Ovary (tissue), 10 donors: ENCODE measurements at regions of chr18 and their contacts with region 1.

Region 1: GRCh38 chr18:2881088-2881839 is 34.5 kb downstream of the EMILIN2 start:
- DNase-seq: peak; percentile 85 to 91 (median 87)
- H3K4me3 ChIP-seq: no peak overlapping the region
- H3K27ac ChIP-seq: peak overlapping the region; percentile 51 to 86
- H3K4me1 ChIP-seq: peaks cover 14% of the 10 kb centered on the region
- H3K27me3 ChIP-seq: no peaks in the 10 kb centered on the region
- CTCF ChIP-seq: no peak
- EP300 ChIP-seq: no peak
- POLR2A ChIP-seq: no peak

Region 2: DNA sequence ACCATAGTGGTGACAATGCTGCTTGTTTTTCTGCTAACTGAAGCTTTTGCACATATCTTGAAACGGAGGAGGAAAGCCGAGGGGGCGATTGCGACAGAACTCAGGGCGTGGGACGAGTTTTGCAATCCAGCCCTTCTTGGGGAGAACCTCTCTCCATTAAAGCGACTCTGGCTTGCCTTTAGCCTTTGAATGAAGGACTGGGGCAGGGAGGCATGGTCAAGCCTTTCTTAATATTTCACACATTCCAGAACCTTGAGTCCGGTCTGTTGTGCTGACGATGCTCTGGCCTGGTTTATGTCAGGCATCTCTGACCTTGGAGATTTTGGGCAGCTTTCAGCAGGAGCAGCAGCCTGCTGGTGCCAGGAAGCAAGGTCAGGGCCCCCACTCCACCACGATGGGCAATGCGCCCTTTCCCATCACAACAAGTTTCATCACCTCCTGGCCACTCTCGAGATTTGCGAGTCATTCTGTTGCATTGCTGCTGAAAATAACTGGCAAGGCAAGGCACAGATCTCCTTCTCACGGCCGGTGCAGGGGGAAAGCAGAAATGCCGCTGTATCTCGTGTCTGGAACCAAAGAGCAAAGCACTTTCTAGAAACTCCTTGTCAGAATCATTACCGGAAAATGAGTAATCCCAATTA is 23.7 kb before region 1 on chr18:
- intact Hi-C with region 1: loop called in 1 of 4 experiments (anchors 2 kb)
- DNase-seq: peak; percentile 87 to 94 (median 92)
- H3K4me3 ChIP-seq: no peak overlapping the region
- H3K27ac ChIP-seq: peak overlapping the region in 1 of 2 donors; percentile 71
- H3K4me1 ChIP-seq: peaks cover 7% of the 10 kb centered on the region
- H3K27me3 ChIP-seq: no peaks in the 10 kb centered on the region
- CTCF ChIP-seq: no peak
- EP300 ChIP-seq: peak; percentile 64
- POLR2A ChIP-seq: no peak